GM10248 (cell line): ENCODE measurements at regions of chr3 and their contacts with region 1.

Region 1: DNA sequence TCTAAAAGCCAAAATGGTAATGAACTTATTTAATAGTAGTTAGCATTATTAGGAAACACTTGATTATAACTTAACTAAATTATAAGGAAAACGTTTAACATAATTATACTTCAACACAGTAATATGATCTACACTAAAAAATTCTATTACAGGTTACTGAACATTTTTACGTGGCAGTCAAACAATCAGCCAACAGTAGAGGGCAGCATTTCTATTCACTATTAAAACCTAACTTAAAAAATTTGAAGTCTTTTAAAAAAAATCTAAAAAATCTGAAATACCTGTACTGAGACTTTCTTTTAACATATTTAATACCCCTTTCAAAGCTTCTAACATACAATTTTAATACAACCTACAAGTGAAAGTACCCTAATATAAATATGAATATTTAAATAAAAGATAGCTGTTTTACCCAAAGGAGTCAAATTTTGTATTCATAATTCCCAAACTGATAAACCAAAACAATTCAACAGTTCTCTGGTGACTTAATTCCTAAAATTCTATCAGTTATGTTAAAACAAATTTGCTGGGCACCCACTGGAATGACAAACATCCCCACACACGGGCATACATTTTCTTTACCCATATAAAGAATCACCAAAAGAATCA is 41.5 kb downstream of the DLG1 start:
- DNase-seq: peak; percentile 14
- CTCF ChIP-seq: peak; percentile 54

Region 2: GRCh38 chr3:197224034-197224444 is 32.9 kb before region 1 on chr3:
- CTCF ChIA-PET with region 1: interaction called, 16 read pairs
- POLR2A ChIA-PET with region 1: no interaction called
- DNase-seq: peak; percentile 57
- CTCF ChIP-seq: peak; percentile 64

Region 3: GRCh38 chr3:197242784-197243432 is 14.0 kb before region 1 on chr3:
- CTCF ChIA-PET with region 1: interaction called, 27 read pairs
- POLR2A ChIA-PET with region 1: no interaction called
- DNase-seq: no peak
- CTCF ChIP-seq: no peak

Region 4: GRCh38 chr3:197406266-197406665 is 149.3 kb after region 1 on chr3:
- CTCF ChIA-PET with region 1: no interaction called
- POLR2A ChIA-PET with region 1: no interaction called
- DNase-seq: no peak
- CTCF ChIP-seq: no peak

Region 5: GRCh38 chr3:197454014-197454413 is 197.1 kb after region 1 on chr3:
- CTCF ChIA-PET with region 1: interaction called, 19 read pairs
- POLR2A ChIA-PET with region 1: no interaction called
- DNase-seq: peak; percentile 31
- CTCF ChIP-seq: peak; percentile 60

Region 6: GRCh38 chr3:197520311-197521276 is 263.7 kb after region 1 on chr3:
- CTCF ChIA-PET with region 1: interaction called, 20 read pairs
- POLR2A ChIA-PET with region 1: no interaction called
- DNase-seq: no peak
- CTCF ChIP-seq: no peak